SK-N-SH (cell line): ENCODE measurements at regions of chr5 and their contacts with region 1.

Region 1: GRCh38 chr5:113606298-113607134 is 93.0 kb downstream of the YTHDC2 start:
- DNase-seq: peak; percentile 66
- H3K4me3 ChIP-seq: peak overlapping the region; percentile 22 to 46; a peak in 2 of 4 replicates
- H3K27ac ChIP-seq: peak overlapping the region in 1 of 2 experiments; percentile 47; a peak in 1 of 4 replicates
- H3K4me1 ChIP-seq: peaks cover 0 to 5% of the 10 kb centered on the region in 2 experiments; a peak in 1 of 4 replicates
- H3K27me3 ChIP-seq: no peaks in the 10 kb centered on the region
- CTCF ChIP-seq: peak; percentile 78
- EP300 ChIP-seq: no peak
- RAD21 ChIP-seq: peak; percentile 90

Region 2: DNA sequence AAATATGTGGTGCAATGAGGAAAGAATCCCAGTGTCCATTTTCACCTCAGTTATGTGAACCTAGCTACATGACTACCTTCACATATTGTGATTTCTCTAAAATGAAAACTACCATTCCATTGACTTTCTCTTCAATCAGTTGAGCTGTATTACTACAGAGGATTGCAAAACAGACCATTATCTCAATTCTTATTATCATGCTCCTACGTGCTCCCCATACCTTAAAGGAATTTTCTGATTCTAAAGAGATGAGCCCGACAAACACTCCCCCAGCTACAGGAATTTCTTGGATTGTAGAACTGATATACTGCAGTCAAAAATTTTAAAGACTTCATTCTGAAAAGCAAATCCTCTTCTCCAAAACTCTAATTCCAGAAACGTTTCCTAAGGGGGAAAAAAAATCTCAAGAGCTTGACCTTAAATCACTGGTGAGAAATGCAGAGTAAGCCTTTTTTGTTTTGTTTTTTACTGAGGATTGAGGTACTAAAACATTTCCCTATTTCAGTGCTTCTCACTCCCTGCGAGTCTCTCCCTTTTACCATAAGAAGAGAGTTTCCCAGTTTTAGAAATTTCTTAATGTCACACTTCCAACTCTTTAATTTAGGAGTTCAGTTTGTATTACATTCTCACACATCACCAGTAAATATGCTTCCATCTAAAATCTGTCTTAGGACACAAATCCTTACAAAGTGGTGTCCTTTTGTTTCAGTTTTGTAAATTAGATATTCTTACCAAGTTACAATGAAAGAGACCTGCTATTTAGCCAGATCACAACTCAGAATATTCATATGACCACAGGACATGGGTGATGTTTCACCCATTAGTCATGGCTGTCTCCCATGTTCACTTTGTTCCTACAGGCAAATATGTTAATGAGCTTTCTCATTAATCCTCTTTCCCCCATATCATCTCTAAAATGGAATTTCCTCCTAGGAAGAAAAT is 375.5 kb before region 1 on chr5:
- CTCF ChIA-PET with region 1: no interaction called
- POLR2A ChIA-PET with region 1: no interaction called
- DNase-seq: no peak
- H3K4me3 ChIP-seq: no peak overlapping the region
- H3K27ac ChIP-seq: no peak overlapping the region
- H3K4me1 ChIP-seq: peaks cover 0 to 10% of the 10 kb centered on the region in 2 experiments; a peak in 2 of 4 replicates
- H3K27me3 ChIP-seq: no peaks in the 10 kb centered on the region
- CTCF ChIP-seq: no peak
- EP300 ChIP-seq: no peak
- RAD21 ChIP-seq: no peak

Region 3: DNA sequence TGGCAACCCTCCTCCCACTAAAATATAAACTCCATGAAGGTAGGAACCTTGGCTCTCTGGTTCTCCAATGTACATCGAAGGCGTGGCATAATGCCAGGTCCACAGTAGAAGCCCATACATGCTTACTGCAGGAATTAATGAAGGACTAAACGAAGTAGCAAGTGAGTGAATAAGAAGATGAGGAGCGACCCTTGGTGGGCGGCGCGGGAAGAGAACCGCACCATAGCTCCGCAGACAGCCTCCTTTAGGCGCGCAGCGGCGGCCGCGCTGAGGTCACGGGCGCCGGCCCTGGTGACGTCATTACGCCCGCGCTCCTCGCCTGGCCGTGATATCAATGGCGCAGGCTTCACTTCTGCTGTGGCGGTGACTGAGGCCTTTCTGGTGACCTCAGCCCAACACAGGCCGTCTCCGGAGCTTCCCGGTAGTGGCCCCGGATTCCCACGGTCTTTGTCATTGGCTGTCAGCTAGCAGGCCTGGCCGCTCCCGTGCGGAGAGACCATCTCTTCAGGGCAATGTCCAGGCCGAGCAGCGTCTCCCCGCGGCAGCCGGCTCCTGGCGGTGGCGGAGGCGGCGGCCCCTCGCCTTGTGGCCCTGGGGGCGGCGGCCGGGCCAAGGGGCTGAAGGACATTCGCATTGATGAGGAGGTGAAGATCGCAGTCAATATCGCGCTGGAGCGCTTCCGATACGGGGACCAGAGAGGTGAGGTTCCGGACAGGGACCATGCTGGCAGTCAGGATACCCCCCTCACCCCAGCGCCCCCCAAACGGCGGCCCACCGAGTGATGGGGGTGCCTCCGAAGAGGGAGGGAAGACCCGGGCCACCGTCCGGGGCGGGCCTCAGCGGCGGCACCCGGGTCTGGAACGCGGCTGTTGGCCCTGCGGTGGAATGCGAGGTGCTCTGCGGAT is 92.9 kb before region 1 on chr5 and contains the start of gene YTHDC2:
- CTCF ChIA-PET with region 1: interaction called, 11 read pairs
- POLR2A ChIA-PET with region 1: no interaction called
- DNase-seq: peak; percentile 89
- H3K4me3 ChIP-seq: peak within 1 kb of the TSS; percentile 78 to 92
- H3K27ac ChIP-seq: peak within 1 kb of the TSS; percentile 83
- H3K4me1 ChIP-seq: peaks cover 0 to 6% of the 10 kb centered on the region in 2 experiments; a peak in 2 of 4 replicates
- H3K27me3 ChIP-seq: no peaks in the 10 kb centered on the region; the same call in 1 of the 2 replicates
- CTCF ChIP-seq: peak; percentile 51
- EP300 ChIP-seq: no peak
- RAD21 ChIP-seq: peak; percentile 71
- polyA plus RNA-seq, gene YTHDC2: 3.5 and 4.7 TPM in 2 replicates